ENCODE measurements at regions of chr18 and their contacts with region 1.

Region 1: GRCh38 chr18:8389391-8390340 is 219.6 kb upstream of the RAB12 start:
- DNase-seq: peak in 1 of 2 donors; percentile 64
- H3K4me3 ChIP-seq: no peak overlapping the region
- H3K27ac ChIP-seq: no peak overlapping the region
- H3K4me1 ChIP-seq: no peaks in the 10 kb centered on the region
- H3K27me3 ChIP-seq: no peaks in the 10 kb centered on the region
- CTCF ChIP-seq: peak; percentile 22 to 61 (median 37)
- POLR2A ChIP-seq: no peak

Region 2: DNA sequence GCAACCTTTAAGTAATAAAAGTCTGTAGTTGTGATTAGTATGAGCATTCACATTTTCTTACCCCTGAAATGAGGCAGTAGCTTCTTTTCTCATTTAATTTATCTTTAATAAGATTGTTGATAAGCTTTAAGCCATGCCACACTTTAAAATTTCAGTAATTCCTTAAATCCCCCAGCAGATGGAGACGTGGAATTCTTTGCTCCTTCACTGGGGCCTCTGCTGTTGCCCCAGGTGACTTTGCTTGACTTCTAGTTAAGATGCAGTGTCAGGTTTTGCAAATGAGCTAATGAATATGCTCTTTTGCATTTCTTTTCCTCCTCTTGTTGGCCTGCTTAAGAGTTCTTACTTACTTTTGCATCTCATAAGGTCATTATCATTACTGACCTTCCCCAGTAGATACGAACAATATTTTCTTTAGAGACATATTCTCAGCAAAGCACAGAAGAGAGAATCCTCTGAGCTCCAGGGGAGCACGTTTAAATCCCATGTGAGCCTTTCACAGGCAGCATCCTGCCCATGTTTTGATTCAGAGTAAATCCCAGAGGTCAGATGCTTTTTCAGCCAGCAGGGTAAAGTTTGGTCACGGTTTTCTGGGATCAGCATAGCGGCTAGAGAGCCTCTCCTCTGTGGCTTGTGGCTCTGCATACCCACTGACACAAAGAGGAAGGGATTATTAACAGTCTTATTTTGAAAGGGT is 599.7 kb before region 1 on chr18:
- intact Hi-C with region 1: loop called (anchors 10 kb)
- DNase-seq: no peak
- H3K4me3 ChIP-seq: no peak overlapping the region
- H3K27ac ChIP-seq: no peak overlapping the region
- H3K4me1 ChIP-seq: no peaks in the 10 kb centered on the region
- H3K27me3 ChIP-seq: no peaks in the 10 kb centered on the region
- CTCF ChIP-seq: peak in 2 of 3 donors; percentile 29 to 46
- POLR2A ChIP-seq: no peak

Region 3: DNA sequence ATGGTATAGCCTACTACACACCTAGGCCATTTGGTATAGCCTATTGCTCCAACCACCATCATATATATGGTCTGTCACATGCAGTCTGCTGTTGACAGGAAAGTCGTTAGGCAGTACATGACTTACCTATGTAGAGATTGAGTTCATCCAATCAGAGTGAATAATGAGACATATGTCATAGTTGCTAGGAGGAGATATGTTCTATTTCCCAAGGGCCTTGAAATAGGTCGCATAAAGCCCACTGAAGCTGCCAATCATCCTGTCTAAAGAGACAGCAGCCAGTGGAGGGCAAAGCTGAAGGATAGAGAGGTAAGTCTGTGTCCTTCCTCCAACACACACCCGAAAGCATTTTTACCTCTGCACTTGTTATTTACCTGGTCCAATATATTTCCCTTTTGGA is 559.2 kb before region 1 on chr18:
- intact Hi-C with region 1: no loop called
- DNase-seq: no peak
- H3K4me3 ChIP-seq: no peak overlapping the region
- H3K27ac ChIP-seq: no peak overlapping the region
- H3K4me1 ChIP-seq: no peaks in the 10 kb centered on the region
- H3K27me3 ChIP-seq: no peaks in the 10 kb centered on the region
- CTCF ChIP-seq: no peak
- POLR2A ChIP-seq: no peak